Dorsolateral prefrontal cortex (tissue), 120 donors: ENCODE measurements at regions of chr5 and their contacts with region 1.

Region 1: GRCh38 chr5:140346348-140347101 is at the start of gene HBEGF:
- DNase-seq: peak; percentile 71 to 90 (median 82)
- H3K4me3 ChIP-seq: peak within 1 kb of the TSS; percentile 61 to 98 (median 89)
- H3K27ac ChIP-seq: peak within 1 kb of the TSS; percentile 10 to 97 (median 91)
- H3K27me3 ChIP-seq: no peaks in the 10 kb centered on the region
- CTCF ChIP-seq: peak in 46 of 56 donors; percentile 3 to 66 (median 40)
- total RNA-seq, gene HBEGF: 5.3 to 27.6 (median 9.3) TPM

Region 2: GRCh38 chr5:139903795-139904565 is 442.5 kb before region 1 on chr5:
- intact Hi-C with region 1: no loop called
- DNase-seq: peak in 7 of 10 donors; percentile 26 to 75 (median 56)
- H3K4me3 ChIP-seq: peak overlapping the region; percentile 47 to 85 (median 71)
- H3K27ac ChIP-seq: peak overlapping the region in 54 of 59 donors; percentile 7 to 89 (median 69)
- H3K27me3 ChIP-seq: no peaks in the 10 kb centered on the region
- CTCF ChIP-seq: peak in 13 of 56 donors; percentile 4 to 38 (median 21)

Region 3: GRCh38 chr5:140174465-140175366 is 171.8 kb before region 1 on chr5 and contains the start of gene CYSTM1:
- intact Hi-C with region 1: loop called in 1 of 2 experiments (anchors 5 kb)
- DNase-seq: peak; percentile 87 to 95 (median 93)
- H3K4me3 ChIP-seq: peak within 1 kb of the TSS; percentile 74 to 100 (median 97)
- H3K27ac ChIP-seq: peak within 1 kb of the TSS; percentile 63 to 100 (median 96)
- H3K27me3 ChIP-seq: no peaks in the 10 kb centered on the region
- CTCF ChIP-seq: peak in 27 of 56 donors; percentile 11 to 57 (median 24)
- total RNA-seq, gene CYSTM1: 28.2 to 110 (median 55.2) TPM

Region 4: DNA sequence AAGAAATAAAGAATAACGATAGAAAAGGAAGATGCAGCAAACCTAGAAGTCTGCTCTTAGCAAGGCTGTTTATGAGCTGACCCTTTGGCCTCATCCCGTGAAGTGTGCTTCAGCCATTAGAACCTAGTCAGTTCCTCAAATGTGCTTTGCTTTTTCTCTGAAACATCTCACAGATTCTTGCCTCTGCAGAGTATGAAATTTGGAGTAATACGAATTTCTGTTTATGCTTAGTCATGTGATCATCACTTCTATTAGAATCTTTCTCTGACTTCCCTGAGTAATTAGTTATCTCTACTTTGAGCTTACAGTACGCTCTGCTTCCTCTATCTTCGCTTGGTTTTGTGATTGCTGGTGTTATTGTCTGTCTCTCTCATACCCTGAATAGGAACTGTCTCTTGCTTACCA is 160.3 kb before region 1 on chr5:
- intact Hi-C with region 1: no loop called
- DNase-seq: no peak
- H3K4me3 ChIP-seq: no peak overlapping the region
- H3K27ac ChIP-seq: no peak overlapping the region
- H3K27me3 ChIP-seq: no peaks in the 10 kb centered on the region
- CTCF ChIP-seq: no peak

Region 5: GRCh38 chr5:140261403-140262171 is 84.9 kb before region 1 on chr5:
- intact Hi-C with region 1: loop called in 1 of 2 experiments (anchors 5 kb)
- DNase-seq: peak in 6 of 10 donors; percentile 65 to 83 (median 74)
- H3K4me3 ChIP-seq: peak overlapping the region in 43 of 59 donors; percentile 2 to 61 (median 35)
- H3K27ac ChIP-seq: peak overlapping the region; percentile 40 to 93 (median 81)
- H3K27me3 ChIP-seq: no peaks in the 10 kb centered on the region
- CTCF ChIP-seq: peak in 40 of 56 donors; percentile 9 to 65 (median 39)

Region 6: GRCh38 chr5:140302786-140303639 is 43.5 kb before region 1 on chr5 and contains the start of gene PFDN1:
- intact Hi-C with region 1: loop called (anchors 5 kb)
- DNase-seq: peak; percentile 89 to 96 (median 94)
- H3K4me3 ChIP-seq: peak within 1 kb of the TSS; percentile 66 to 99 (median 87)
- H3K27ac ChIP-seq: peak within 1 kb of the TSS in 58 of 59 donors; percentile 59 to 96 (median 86)
- H3K27me3 ChIP-seq: no peaks in the 10 kb centered on the region
- CTCF ChIP-seq: peak in 29 of 56 donors; percentile 8 to 52 (median 24)
- total RNA-seq, gene PFDN1: 43.9 to 80.3 (median 64.1) TPM

Region 7: DNA sequence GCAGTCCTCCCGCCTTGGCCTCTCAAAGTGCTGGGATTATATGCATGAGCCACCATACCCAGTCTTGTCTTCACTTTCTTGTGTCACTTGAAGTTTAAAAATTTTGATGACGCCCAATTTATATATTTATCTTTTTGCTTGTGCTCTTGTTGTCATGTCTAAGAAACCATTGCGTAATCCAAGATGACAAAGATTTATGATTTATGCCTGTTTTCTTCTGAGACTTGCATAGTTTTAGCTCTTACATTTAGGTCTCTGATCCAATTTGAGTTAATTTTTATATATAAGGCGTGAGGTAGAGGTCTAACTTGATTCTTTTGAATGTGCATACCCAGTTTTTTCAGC is 73.7 kb after region 1 on chr5:
- intact Hi-C with region 1: no loop called
- DNase-seq: no peak
- H3K4me3 ChIP-seq: no peak overlapping the region
- H3K27ac ChIP-seq: no peak overlapping the region
- H3K27me3 ChIP-seq: no peaks in the 10 kb centered on the region
- CTCF ChIP-seq: no peak

Region 8: GRCh38 chr5:140564196-140565023 is 217.9 kb after region 1 on chr5 and contains the starts of genes APBB3 and SLC35A4:
- intact Hi-C with region 1: no loop called
- DNase-seq: peak; percentile 93 to 99 (median 98)
- H3K4me3 ChIP-seq: peak within 1 kb of the TSS; percentile 61 to 98 (median 88)
- H3K27ac ChIP-seq: peak within 1 kb of the TSS; percentile 78 to 98 (median 95)
- H3K27me3 ChIP-seq: no peaks in the 10 kb centered on the region
- CTCF ChIP-seq: peak in 29 of 56 donors; percentile 3 to 62 (median 24)
- total RNA-seq, gene APBB3: 34.6 to 98.7 (median 58.4) TPM
- total RNA-seq, gene SLC35A4: 23.5 to 50.7 (median 34.7) TPM